Activated naive CD4-positive, alpha-beta T cell treated with anti-CD3 and anti-CD28 coated beads for 36 hours (primary cell): ENCODE measurements at regions of chr17 and their contacts with region 1.

Region 1: GRCh38 chr17:45135192-45135977 is at the start of gene ACBD4:
- DNase-seq: peak; percentile 98
- H3K4me3 Mint-ChIP-seq: peak within 1 kb of the TSS; percentile 90
- H3K27ac Mint-ChIP-seq: peak within 1 kb of the TSS; percentile 75
- H3K4me1 Mint-ChIP-seq: peaks cover 8% of the 10 kb centered on the region
- H3K27me3 Mint-ChIP-seq: peaks cover 4% of the 10 kb centered on the region
- total RNA-seq, gene ACBD4: 12.3 to 12.7 TPM

Region 2: GRCh38 chr17:44919885-44920564 is 215.4 kb before region 1 on chr17:
- CTCF ChIA-PET with region 1: interaction called, 3 read pairs
- intact Hi-C with region 1: loop called (anchors 1 kb)
- DNase-seq: peak; percentile 84
- H3K4me3 Mint-ChIP-seq: no peak overlapping the region
- H3K27ac Mint-ChIP-seq: no peak overlapping the region
- H3K4me1 Mint-ChIP-seq: no peaks in the 10 kb centered on the region
- H3K27me3 Mint-ChIP-seq: peaks cover 18% of the 10 kb centered on the region

Region 3: DNA sequence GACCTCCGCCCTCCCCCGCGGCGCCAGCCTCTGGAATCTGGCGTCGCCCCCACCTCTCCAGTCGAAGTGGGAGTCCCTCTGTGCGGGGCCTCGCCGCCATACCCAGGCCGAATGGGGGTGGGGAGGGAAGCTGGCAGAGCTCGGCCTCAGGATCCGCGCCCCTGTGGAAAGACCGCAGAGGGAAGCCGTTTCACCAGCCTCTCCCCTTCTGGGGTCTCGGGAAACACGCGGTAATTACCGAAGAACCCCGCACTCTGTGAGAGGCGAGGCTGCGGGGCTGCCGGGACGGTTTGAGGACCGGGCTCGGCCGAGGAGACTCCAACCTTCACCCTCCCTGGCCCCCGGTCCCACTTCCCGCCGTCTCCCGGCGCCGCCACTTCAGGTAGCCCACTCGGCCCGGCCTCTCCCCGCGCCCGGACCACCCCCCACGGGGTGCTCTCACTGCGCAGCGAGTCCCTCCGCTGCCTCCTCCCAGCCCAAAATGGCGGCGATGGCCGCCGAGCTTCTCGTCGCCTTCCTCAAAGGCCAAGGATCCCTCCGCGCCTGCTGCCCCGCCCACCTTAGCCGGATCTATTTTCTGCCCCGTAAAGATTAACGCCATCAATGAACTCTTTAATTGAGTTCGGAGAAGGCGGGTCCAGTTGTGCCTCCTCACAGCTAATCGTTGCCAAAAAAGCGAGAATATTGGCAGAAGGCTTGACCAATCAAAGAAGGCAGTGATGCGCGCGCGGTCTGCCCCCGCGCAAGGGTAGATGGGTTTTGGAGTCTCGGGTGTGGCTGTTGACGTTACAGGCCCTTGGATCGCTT is 25.8 kb after region 1 on chr17:
- CTCF ChIA-PET with region 1: interaction called, 252 read pairs
- intact Hi-C with region 1: loop called (anchors 1 kb)
- DNase-seq: peak; percentile 99
- H3K4me3 Mint-ChIP-seq: peak overlapping the region; percentile 96
- H3K27ac Mint-ChIP-seq: peak overlapping the region; percentile 96
- H3K4me1 Mint-ChIP-seq: peaks cover 33% of the 10 kb centered on the region
- H3K27me3 Mint-ChIP-seq: no peaks in the 10 kb centered on the region

Region 4: GRCh38 chr17:45190503-45191255 is 55.3 kb after region 1 on chr17:
- CTCF ChIA-PET with region 1: interaction called, 255 read pairs
- intact Hi-C with region 1: no loop called
- DNase-seq: no peak
- H3K4me3 Mint-ChIP-seq: no peak overlapping the region
- H3K27ac Mint-ChIP-seq: no peak overlapping the region
- H3K4me1 Mint-ChIP-seq: no peaks in the 10 kb centered on the region
- H3K27me3 Mint-ChIP-seq: no peaks in the 10 kb centered on the region

Region 5: DNA sequence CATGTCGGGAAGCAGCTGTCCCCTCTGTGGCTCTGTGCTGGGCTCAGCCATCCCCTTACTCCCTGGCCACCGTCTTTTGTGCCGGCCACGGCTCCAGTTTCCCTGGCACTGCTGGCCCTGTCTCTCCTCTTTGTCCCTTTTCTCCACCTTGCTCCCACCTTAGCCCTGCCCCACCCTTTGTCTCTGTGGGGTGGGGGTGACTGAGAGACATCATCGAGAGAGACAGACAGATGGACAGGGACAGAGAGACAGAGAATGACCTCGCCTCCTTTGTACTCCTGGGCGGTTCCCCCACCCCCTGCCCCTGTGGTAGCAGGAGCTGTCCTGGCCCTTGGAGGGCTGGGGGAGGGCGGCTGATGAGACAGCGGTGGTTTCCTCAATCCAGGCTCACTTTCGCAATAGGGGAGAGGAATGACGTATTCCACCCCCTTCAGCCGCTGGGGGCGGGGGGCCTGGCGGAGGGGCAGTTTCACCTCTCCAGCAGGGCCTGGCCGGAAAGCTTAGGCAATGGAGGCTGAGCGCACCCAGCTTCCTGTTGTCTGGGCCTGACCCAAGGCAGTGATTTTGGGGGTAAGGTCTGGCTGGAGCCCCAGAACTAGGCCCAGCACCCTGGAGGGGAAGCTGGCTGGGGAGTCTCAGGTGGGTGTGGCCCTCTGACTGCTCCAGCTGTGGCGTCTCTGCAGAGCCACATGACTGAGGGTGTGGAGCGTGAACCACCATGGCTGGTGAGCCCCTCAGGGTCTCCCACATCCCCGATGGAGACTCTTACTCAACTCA is 93.6 kb after region 1 on chr17:
- CTCF ChIA-PET with region 1: interaction called, 10 read pairs
- intact Hi-C with region 1: no loop called
- DNase-seq: peak; percentile 96
- H3K4me3 Mint-ChIP-seq: peak overlapping the region; percentile 100
- H3K27ac Mint-ChIP-seq: peak overlapping the region; percentile 100
- H3K4me1 Mint-ChIP-seq: peaks cover 82% of the 10 kb centered on the region
- H3K27me3 Mint-ChIP-seq: no peaks in the 10 kb centered on the region

Region 6: GRCh38 chr17:45573924-45574770 is 438.8 kb after region 1 on chr17:
- CTCF ChIA-PET with region 1: no interaction called
- intact Hi-C with region 1: no loop called
- DNase-seq: no peak
- H3K4me3 Mint-ChIP-seq: no peak overlapping the region
- H3K27ac Mint-ChIP-seq: no peak overlapping the region
- H3K4me1 Mint-ChIP-seq: peaks cover 44% of the 10 kb centered on the region
- H3K27me3 Mint-ChIP-seq: no peaks in the 10 kb centered on the region